Activated naive CD4-positive, alpha-beta T cell treated with anti-CD3 and anti-CD28 coated beads for 36 hours (primary cell): ENCODE measurements at regions of chr21 and their contacts with region 1.

Region 1: DNA sequence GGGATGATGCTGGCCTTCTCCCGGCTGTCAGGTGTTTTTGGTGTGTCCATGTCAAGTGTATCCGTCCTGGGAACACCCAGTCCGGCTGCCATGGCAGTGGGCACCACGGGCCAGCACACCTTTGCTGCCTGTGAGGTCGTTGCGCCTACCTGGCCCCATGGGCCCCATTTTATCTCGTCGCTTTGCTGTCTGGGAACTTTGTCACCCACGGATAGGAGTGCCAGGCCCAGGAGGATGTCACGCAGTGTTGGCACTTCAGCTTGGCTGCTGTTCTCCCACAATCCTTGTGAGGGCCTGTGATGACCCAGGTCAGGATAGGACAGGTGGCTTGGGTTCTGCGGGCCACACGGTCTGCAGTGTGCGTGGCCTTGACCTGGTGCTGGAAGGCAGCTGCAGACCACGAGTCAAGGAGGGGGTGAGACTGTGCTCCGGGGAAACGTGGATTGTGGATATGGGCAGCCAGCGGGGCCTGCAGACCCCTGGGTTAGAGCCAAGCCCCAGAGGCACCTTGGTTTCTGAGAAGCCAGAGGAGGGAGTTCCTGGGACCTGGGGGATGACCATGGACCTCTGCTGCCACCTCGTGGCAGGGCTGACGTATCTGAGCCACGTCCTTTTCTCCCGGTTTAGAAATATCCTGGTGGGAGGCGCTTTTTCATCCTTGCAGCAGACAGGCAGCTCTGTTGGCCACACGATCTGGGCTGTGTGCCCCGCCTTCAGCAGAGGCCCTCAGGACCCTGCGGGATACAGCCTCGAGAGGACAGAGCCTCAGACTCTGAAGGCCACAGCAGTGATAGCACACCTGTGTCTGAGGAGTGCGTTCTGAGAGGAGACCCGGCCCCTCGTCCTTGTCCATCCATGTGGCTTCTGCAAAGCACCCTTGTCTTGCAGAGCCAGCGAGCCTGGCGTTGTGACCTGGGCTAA is 161.1 kb upstream of the COL6A1 start:
- DNase-seq: peak; percentile 89
- H3K4me3 Mint-ChIP-seq: no peak overlapping the region
- H3K27ac Mint-ChIP-seq: peak overlapping the region; percentile 92
- H3K4me1 Mint-ChIP-seq: peaks cover 44% of the 10 kb centered on the region
- H3K27me3 Mint-ChIP-seq: no peaks in the 10 kb centered on the region

Region 2: GRCh38 chr21:45050786-45051489 is 769.5 kb before region 1 on chr21:
- CTCF ChIA-PET with region 1: no interaction called
- intact Hi-C with region 1: no loop called
- DNase-seq: no peak
- H3K4me3 Mint-ChIP-seq: no peak overlapping the region
- H3K27ac Mint-ChIP-seq: no peak overlapping the region
- H3K4me1 Mint-ChIP-seq: no peaks in the 10 kb centered on the region
- H3K27me3 Mint-ChIP-seq: peaks cover 10% of the 10 kb centered on the region

Region 3: DNA sequence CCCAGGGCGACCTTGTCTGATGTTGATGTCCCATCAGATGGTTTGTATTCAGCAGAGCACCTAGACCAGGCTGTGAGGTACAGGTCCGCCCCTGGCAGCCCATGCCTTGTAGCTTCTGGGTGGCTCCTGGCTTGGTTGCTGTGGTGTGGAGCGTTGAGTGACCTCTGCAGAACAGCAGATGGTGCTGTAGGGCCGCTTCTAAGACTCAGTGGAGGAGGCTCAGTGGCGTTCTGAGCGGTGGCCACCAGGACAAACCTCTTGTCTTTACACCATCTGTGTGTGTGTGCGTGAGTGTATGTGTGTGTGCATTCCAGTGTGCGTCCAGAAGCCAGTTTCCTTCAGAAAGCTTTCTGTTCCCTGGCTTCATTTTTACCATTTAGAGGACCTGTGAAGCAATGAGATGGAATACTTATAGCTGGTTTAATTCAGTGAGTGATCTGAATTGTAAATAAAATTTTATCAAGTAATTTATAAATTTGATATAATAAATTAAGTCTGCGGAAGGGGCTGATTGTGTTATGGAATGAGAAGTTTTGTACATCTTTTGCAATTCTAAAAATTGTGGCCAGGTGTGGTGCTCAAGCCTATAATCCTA is 680.0 kb before region 1 on chr21:
- CTCF ChIA-PET with region 1: interaction called, 3 read pairs
- intact Hi-C with region 1: loop called (anchors 5 kb)
- DNase-seq: peak; percentile 78
- H3K4me3 Mint-ChIP-seq: no peak overlapping the region
- H3K27ac Mint-ChIP-seq: no peak overlapping the region
- H3K4me1 Mint-ChIP-seq: peaks cover 3% of the 10 kb centered on the region
- H3K27me3 Mint-ChIP-seq: no peaks in the 10 kb centered on the region

Region 4: GRCh38 chr21:45478115-45478801 is 342.2 kb before region 1 on chr21:
- CTCF ChIA-PET with region 1: interaction called, 8 read pairs
- intact Hi-C with region 1: loop called (anchors 1 kb)
- DNase-seq: peak; percentile 90
- H3K4me3 Mint-ChIP-seq: peak overlapping the region; percentile 71
- H3K27ac Mint-ChIP-seq: peak overlapping the region; percentile 94
- H3K4me1 Mint-ChIP-seq: peaks cover 30% of the 10 kb centered on the region
- H3K27me3 Mint-ChIP-seq: no peaks in the 10 kb centered on the region

Region 5: GRCh38 chr21:45590246-45590725 is 230.1 kb before region 1 on chr21:
- CTCF ChIA-PET with region 1: no interaction called
- intact Hi-C with region 1: loop called (anchors 1 kb)
- DNase-seq: peak; percentile 84
- H3K4me3 Mint-ChIP-seq: peak overlapping the region; percentile 52
- H3K27ac Mint-ChIP-seq: no peak overlapping the region
- H3K4me1 Mint-ChIP-seq: peaks cover 34% of the 10 kb centered on the region
- H3K27me3 Mint-ChIP-seq: peaks cover 9% of the 10 kb centered on the region

Region 6: DNA sequence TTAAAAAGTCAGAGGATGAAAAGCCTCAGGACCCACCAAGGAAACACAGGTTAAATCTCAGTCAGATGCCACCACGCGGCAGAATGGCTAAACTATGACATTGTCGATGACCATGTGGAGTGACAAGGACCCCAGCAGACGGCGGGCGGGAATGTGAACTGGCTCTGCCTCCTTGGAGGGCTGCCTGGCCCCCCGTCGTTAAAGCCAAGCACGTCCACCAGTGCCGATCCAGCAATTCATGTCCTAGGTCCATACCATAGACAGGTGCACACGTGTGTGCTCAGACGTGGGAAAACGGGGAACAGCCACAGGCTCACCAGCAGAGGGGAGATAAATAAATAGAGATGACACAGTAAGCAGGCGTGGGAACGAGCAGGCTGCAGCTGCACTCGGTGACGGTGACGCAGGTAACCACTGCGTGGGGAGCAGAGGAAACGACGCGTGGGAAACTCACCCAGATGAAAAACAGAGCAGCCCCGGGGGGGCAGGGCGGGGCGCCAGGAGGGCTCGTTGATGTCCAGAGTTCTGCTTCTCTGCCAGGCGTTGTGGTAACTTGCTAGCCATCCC is 205.2 kb before region 1 on chr21:
- CTCF ChIA-PET with region 1: no interaction called
- intact Hi-C with region 1: loop called (anchors 1 kb)
- DNase-seq: peak; percentile 88
- H3K4me3 Mint-ChIP-seq: peak overlapping the region; percentile 58
- H3K27ac Mint-ChIP-seq: no peak overlapping the region
- H3K4me1 Mint-ChIP-seq: peaks cover 31% of the 10 kb centered on the region
- H3K27me3 Mint-ChIP-seq: no peaks in the 10 kb centered on the region

Region 7: DNA sequence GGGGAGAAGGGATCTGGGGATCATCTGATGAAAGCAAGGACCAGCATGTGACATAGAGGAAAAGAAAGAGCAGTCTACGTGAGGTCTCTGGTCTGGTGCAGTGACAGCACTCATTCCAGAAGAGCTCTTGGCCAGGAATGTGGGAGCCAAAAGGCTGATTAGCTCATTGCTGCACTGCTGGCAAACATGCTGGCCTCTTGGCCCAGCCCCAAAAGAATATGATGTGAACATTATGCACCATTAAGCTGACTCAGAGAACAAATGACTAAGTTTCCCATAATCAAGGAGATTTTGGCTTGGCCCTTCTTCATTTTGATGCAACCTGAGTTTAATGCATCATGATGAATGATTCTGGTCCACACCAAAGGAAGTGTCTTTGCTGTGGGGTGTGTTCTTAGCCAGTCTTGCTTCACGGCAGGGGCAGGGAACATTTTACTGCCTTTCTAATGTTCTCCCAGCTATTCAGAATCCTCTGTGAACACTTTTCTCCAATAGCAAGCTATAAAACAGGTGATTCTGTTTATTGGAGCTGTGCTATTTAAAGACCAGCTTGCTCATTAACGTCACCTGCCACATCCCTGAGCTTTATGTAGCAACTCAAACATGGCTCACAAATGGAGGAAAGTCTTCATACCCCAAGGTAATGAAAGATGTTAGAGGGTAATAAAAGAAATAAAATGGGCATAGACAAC is 121.8 kb before region 1 on chr21:
- CTCF ChIA-PET with region 1: no interaction called
- intact Hi-C with region 1: loop called (anchors 1 kb)
- DNase-seq: peak; percentile 56
- H3K4me3 Mint-ChIP-seq: no peak overlapping the region
- H3K27ac Mint-ChIP-seq: peak overlapping the region; percentile 79
- H3K4me1 Mint-ChIP-seq: peaks cover 38% of the 10 kb centered on the region
- H3K27me3 Mint-ChIP-seq: no peaks in the 10 kb centered on the region

Region 8: GRCh38 chr21:45880097-45881068 is 60.0 kb after region 1 on chr21:
- CTCF ChIA-PET with region 1: interaction called, 3 read pairs
- intact Hi-C with region 1: loop called (anchors 2 kb)
- DNase-seq: peak; percentile 93
- H3K4me3 Mint-ChIP-seq: no peak overlapping the region
- H3K27ac Mint-ChIP-seq: peak overlapping the region; percentile 50
- H3K4me1 Mint-ChIP-seq: peaks cover 35% of the 10 kb centered on the region
- H3K27me3 Mint-ChIP-seq: no peaks in the 10 kb centered on the region

Region 9: DNA sequence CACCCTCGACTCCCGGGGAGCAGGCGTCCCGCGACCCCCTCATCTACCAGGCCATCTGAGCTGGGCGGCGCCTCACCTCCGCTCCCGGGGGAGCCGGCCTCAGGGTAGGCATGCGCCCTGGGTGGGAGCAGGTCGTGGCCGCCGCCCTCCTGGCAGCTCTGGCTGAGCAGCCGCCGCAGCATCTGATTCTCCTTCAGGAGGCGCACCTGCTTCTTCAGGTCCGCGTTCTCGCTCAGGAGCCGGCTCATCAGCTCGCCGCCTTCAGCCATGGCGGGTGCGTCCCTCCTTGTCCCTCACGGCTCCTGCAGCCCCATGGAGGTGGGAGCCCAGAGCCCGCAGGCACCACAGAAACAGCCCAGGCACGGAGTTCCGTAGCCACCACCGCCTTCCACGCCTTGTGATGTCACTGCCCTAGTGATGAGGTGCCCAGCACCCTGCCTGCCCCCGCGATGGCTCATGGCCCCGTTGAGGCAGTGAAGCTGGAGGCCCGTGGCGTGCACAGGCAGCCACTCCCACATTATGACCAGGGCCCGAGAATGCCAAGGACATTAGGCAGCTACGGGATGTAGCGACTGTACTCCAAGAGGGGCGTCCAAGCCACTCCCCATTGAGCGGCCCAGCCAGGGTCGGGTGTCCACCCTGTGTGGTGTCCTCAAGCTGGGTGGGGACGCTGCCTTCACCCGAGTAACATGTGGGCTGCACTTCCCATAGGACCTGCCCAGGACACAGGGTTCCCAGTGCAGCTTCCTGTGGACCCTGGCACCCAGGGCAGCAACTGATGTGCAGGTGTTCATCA is 362.3 kb after region 1 on chr21:
- CTCF ChIA-PET with region 1: no interaction called
- intact Hi-C with region 1: no loop called
- DNase-seq: no peak
- H3K4me3 Mint-ChIP-seq: peak overlapping the region; percentile 63
- H3K27ac Mint-ChIP-seq: no peak overlapping the region
- H3K4me1 Mint-ChIP-seq: peaks cover 6% of the 10 kb centered on the region
- H3K27me3 Mint-ChIP-seq: no peaks in the 10 kb centered on the region